ENCODE measurements at regions of chr1 and their contacts with region 1.

Region 1: GRCh38 chr1:168466092-168466713 is 77.6 kb downstream of the XCL2 start:
- DNase-seq: no peak
- H3K4me3 Mint-ChIP-seq: no peak overlapping the region
- H3K27ac Mint-ChIP-seq: peak overlapping the region; percentile 76
- H3K4me1 Mint-ChIP-seq: peaks cover 58% of the 10 kb centered on the region
- H3K27me3 Mint-ChIP-seq: no peaks in the 10 kb centered on the region

Region 2: DNA sequence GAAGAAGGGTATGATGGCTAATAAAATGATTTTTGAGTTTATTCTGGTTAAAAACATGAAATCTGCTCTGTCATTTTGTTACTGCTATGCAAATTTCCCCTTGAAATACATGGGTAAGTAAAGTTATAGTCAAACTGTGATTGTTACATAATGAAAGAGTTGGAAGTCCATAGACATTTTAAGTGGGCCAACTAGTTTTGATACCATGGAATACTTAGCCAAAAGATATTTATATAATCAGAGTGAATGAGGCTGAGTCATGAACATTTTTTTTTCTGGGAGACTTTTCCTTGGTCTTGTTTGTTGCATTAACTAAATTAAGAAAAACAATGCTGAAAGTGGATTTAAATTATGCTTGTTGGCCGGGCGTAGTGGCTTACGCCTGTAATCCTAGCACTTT is 471.2 kb before region 1 on chr1:
- intact Hi-C with region 1: loop called (anchors 10 kb)
- DNase-seq: no peak
- H3K4me3 Mint-ChIP-seq: no peak overlapping the region
- H3K27ac Mint-ChIP-seq: no peak overlapping the region
- H3K4me1 Mint-ChIP-seq: peaks cover 9% of the 10 kb centered on the region
- H3K27me3 Mint-ChIP-seq: no peaks in the 10 kb centered on the region

Region 3: DNA sequence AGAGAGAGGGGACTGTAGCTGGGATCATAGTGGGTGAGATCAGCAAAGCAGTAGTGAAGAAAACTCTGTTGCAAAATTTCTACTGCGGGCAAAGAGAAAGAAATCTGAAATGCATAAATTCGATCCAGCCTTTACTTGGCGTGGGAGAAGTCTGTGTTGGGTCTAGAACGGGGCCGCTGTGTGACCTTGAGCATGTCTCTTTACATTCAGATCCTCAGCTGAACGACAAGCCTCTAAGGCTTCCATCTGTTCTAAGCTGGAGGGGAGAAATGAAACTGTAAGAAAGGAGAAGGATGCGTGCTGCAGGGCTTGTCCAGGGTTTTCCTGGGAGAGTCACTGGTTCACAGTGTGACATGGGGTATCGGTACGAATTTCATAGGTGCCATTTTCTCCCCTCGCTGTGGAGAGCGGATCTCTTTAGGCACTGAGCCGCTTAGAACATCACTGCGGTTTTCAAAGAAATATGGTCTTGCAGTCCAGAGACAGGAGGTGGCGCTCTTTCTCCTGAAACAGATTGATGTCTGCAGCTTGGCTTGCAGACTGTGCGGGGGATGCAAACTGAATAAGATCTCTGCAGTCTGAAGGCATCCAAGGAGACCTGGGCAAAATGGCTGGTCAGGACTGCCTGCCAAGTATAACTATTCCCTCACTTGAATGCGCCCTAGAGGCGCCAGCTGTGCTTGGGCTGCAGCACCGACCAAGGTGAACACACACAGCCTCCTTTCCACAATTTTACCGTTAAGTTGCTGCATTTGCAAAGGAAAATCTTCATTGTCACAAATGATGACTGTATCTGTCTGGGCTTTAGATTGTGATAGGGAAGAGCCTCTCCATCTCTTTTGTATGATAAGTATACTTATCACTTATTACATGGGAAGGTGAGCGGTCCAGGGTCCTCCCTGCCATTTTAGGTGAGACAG is 26.5 kb before region 1 on chr1:
- intact Hi-C with region 1: loop called (anchors 1 kb)
- DNase-seq: peak; percentile 79
- H3K4me3 Mint-ChIP-seq: peak overlapping the region; percentile 58
- H3K27ac Mint-ChIP-seq: peak overlapping the region; percentile 65
- H3K4me1 Mint-ChIP-seq: peaks cover 57% of the 10 kb centered on the region
- H3K27me3 Mint-ChIP-seq: no peaks in the 10 kb centered on the region

Region 4: DNA sequence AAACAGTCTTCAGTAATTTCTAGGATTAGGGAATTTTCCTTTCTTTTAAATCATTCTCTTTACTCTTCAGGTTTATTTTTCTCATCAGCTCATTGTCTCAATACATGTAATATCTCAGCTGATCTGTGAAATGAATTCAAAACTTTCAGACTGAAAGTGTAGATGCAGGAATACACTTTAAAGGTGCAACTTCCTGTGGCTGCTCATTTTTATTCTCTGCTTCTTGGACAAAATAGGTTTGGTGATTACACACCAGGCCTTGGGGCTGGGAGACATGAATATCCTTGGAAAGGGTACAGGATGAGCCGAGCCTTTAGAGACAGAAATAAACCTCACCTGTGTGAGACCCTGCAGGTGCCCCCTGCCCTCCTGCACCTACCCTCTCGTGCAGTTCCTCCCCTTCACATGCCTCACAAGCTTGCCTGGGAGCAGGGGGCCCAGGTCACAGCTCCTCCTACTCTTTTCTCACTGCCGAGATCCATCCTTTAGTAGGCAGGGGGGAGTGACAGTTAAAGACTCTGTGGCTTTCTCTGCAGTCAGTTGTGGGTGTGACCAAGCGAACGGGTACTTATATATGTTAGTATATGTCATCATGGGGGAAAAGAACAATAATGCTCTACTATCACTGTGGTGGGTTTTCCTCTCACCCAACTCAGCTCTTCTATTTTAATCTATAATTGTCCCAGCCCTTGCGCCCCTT is 54.0 kb after region 1 on chr1:
- intact Hi-C with region 1: loop called (anchors 1 kb)
- DNase-seq: peak; percentile 40
- H3K4me3 Mint-ChIP-seq: peak overlapping the region; percentile 67
- H3K27ac Mint-ChIP-seq: peak overlapping the region; percentile 91
- H3K4me1 Mint-ChIP-seq: peaks cover 53% of the 10 kb centered on the region
- H3K27me3 Mint-ChIP-seq: no peaks in the 10 kb centered on the region

Region 5: DNA sequence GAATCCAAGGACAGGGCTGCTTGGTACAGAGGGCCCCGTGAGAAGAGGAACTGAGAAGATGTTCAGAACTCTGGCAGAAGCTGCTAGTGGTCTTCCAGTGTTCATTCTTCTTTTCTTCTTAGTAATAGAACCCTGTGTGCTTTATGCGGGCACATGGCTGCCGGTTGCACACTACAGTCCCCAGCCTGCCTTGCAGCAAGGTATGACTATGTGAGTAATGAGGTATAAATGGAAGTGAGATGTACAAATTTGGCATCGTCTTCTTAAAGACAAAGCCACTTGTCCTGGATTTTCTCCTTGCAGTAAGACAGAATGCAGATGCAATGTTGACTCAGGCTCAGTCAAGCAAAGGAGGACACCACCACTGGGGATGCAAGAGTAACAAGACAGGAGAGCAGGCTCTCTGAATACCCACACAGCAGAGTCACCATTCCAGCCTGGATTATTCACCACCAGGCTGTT is 625.3 kb after region 1 on chr1:
- intact Hi-C with region 1: loop called (anchors 10 kb)
- DNase-seq: no peak
- H3K4me3 Mint-ChIP-seq: no peak overlapping the region
- H3K27ac Mint-ChIP-seq: no peak overlapping the region
- H3K4me1 Mint-ChIP-seq: peaks cover 8% of the 10 kb centered on the region
- H3K27me3 Mint-ChIP-seq: peaks cover 9% of the 10 kb centered on the region

Measured in activated T-helper 2 cell treated with anti-CD3 and anti-CD28 coated beads, Interferon-gamma antibody, Interleukin-2, Interleukin-4, amounts not matched to agents 10 μg/mL and 5 μg/mL and 100 μg/mL, durations not matched to agents 14 hours and 24 hours and 36 hours (primary cell).